Lower leg skin (tissue), 4 donors: ENCODE measurements at regions of chr16 and their contacts with region 1.

Region 1: DNA sequence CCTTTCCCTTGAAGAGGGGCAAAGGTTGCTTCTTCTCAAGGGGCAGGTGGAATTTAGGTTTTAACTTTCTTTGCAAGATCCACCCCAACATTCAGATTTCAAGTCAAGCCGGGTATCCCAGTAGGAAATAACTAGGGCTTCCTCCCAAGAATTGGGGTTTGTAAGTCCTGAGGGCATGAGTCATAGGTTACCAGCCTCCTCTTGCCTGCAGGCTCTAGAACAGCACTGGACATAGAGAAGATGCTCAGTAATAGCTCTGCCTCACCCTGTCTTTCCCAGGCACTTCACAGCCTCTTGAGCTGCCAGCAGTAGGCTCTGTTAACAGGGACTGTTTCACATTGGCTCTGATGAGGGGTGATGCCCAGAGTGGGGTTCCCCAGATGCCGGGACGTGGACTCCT is 35.8 kb upstream of the ZFP90 start:
- DNase-seq: no peak
- H3K4me3 ChIP-seq: no peak overlapping the region
- CTCF ChIP-seq: no peak
- POLR2A ChIP-seq: no peak

Region 2: GRCh38 chr16:68396481-68396880 is 106.9 kb before region 1 on chr16:
- intact Hi-C with region 1: loop called (anchors 10 kb)
- DNase-seq: no peak
- H3K4me3 ChIP-seq: no peak overlapping the region
- CTCF ChIP-seq: no peak
- POLR2A ChIP-seq: no peak

Region 3: DNA sequence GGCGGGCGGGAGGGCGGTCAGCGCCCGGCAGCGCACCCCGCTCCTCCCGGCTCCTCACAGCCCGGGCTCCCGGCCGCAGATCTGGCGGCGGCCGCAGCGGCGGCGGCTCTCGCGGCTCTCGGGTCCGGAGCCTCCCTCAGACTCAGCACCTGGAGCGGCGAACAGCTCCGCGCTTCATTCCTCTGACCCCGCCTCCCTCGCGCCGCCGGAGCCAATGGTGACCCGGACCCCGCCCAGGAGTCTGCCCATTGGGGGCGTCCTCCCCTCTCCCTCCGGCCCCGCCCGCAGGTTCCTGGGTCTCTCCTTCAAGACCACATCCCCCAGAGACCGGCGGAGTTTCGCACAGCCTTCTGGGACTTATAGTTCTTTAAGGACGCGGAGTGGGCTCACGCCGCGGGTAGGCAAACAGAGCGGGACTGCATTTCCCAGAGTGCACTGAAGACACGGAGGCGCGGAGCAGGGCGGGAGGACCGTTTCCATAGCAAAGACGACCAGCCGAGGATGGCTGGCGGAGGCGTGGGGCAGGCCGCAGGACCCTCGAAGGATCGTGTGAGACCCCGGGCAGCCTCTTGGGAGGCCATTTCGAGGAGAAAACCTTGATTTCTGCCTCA is 54.9 kb before region 1 on chr16 and contains the start of gene SMPD3:
- intact Hi-C with region 1: loop called (anchors 5 kb)
- DNase-seq: peak; percentile 86 to 96
- H3K4me3 ChIP-seq: no peak within 1 kb of the TSS
- CTCF ChIP-seq: no peak
- POLR2A ChIP-seq: no peak
- total RNA-seq, gene SMPD3: 30.2 to 135 (median 58.3) TPM